ENCODE measurements at regions of chr2 and their contacts with region 1.

Region 1: DNA sequence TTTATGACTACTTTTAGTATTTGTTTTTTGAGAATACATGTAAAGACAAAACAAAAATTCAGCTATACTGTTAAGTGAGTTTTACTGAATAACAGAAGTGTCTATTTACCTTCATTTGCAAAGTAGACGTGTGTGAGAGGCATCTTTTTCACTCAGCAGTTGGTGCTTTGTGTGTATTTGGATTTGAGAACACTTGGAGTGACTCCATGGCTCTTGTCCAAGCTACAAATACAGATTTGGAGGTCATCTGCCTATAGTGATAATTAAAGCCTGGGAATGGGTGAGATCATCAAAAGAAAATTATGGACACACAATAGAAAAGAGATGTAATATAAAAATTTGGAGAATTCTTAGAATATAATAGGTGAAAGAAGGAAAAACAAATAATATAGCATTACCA is 6.2 kb downstream of the NAB1 start:
- DNase-seq: no peak
- ATAC-seq: no peak
- H3K4me3 ChIP-seq: no peak overlapping the region
- H3K27ac ChIP-seq: no peak overlapping the region
- H3K4me1 ChIP-seq: peaks cover 0 to 9% of the 10 kb centered on the region in 2 experiments; a peak in 3 of 4 replicates
- H3K27me3 ChIP-seq: no peaks in the 10 kb centered on the region
- CTCF ChIP-seq: no peak
- POLR2A ChIP-seq: no peak
- RAD21 ChIP-seq: no peak

Region 2: GRCh38 chr2:190641469-190641868 is 13.6 kb before region 1 on chr2:
- CTCF ChIA-PET with region 1: no interaction called
- POLR2A ChIA-PET with region 1: no interaction called
- RAD21 ChIA-PET with region 1: no interaction called
- intact Hi-C with region 1: no loop called
- DNase-seq: no peak
- ATAC-seq: no peak
- H3K4me3 ChIP-seq: no peak overlapping the region
- H3K27ac ChIP-seq: no peak overlapping the region
- H3K4me1 ChIP-seq: peaks cover 1 to 3% of the 10 kb centered on the region in 2 experiments; a peak in 3 of 4 replicates
- H3K27me3 ChIP-seq: no peaks in the 10 kb centered on the region
- CTCF ChIP-seq: no peak
- POLR2A ChIP-seq: no peak
- RAD21 ChIP-seq: no peak

Region 3: GRCh38 chr2:190911813-190912212 is 256.7 kb after region 1 on chr2:
- CTCF ChIA-PET with region 1: no interaction called
- POLR2A ChIA-PET with region 1: no interaction called
- RAD21 ChIA-PET with region 1: no interaction called
- intact Hi-C with region 1: loop called (anchors 5 kb)
- DNase-seq: no peak
- ATAC-seq: no peak
- H3K4me3 ChIP-seq: no peak overlapping the region
- H3K27ac ChIP-seq: no peak overlapping the region
- H3K4me1 ChIP-seq: no peaks in the 10 kb centered on the region
- H3K27me3 ChIP-seq: no peaks in the 10 kb centered on the region
- CTCF ChIP-seq: no peak
- POLR2A ChIP-seq: no peak
- RAD21 ChIP-seq: no peak

Measured in HCT116 (cell line).